Mammary epithelial cell (primary cell): ENCODE measurements at regions of chr6 and their contacts with region 1.

Region 1: DNA sequence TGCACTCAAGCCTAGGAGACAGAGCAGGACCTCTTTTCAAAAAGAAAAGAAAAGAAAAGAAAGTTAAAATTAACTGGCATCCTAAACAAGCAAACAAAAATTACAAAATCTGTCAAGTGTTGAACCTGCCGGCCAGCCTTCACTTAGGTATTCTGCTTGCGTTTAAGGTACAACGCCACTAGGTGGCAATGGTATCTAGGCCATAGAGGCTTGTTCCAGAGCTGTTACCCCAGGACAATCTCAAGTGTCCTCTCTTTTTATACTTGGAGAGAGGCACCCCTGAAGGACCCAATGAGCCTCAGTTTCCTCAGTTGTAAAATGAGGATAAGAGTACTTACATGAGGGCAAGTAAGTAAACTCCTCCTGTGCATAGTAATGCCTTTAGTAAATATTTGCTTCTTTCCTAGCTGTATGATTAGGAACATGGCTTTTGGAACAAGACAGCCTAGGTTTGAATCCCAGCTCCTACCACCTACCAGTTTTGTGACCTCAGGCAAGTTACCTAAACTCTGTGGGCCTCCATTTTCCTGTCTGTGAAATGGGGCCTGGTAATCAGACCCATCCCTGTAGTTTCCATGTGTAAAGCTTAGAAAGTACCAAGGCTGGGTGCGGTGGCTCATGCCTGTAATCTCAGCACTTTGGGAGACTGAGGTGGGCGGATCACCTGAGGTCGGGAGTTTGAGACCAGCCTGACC is 5.8 kb upstream of the PACSIN1 start:
- DNase-seq: peak; percentile 49
- H3K4me3 ChIP-seq: no peak overlapping the region
- H3K27ac ChIP-seq: no peak overlapping the region
- H3K4me1 ChIP-seq: peaks cover 6% of the 10 kb centered on the region
- H3K27me3 ChIP-seq: no peaks in the 10 kb centered on the region
- CTCF ChIP-seq: peak; percentile 69 to 84

Region 2: GRCh38 chr6:34161857-34162515 is 298.1 kb before region 1 on chr6:
- CTCF ChIA-PET with region 1: no interaction called
- dilution Hi-C with region 1: no loop called
- in situ Hi-C with region 1: no loop called
- intact Hi-C with region 1: loop called (anchors 1 kb)
- DNase-seq: no peak
- H3K4me3 ChIP-seq: no peak overlapping the region
- H3K27ac ChIP-seq: no peak overlapping the region
- H3K4me1 ChIP-seq: no peaks in the 10 kb centered on the region
- H3K27me3 ChIP-seq: no peaks in the 10 kb centered on the region
- CTCF ChIP-seq: no peak

Region 3: GRCh38 chr6:34526992-34527728 is 67.1 kb after region 1 on chr6:
- CTCF ChIA-PET with region 1: no interaction called
- dilution Hi-C with region 1: no loop called
- in situ Hi-C with region 1: no loop called
- intact Hi-C with region 1: loop called (anchors 2 kb)
- DNase-seq: peak; percentile 82
- H3K4me3 ChIP-seq: peak overlapping the region in 2 of 3 experiments; percentile 13 to 30
- H3K27ac ChIP-seq: peak overlapping the region; percentile 19
- H3K4me1 ChIP-seq: peaks cover 9% of the 10 kb centered on the region
- H3K27me3 ChIP-seq: no peaks in the 10 kb centered on the region
- CTCF ChIP-seq: peak; percentile 38 to 70

Region 4: GRCh38 chr6:34696739-34697543 is 236.9 kb after region 1 on chr6 and contains the start of gene ILRUN:
- CTCF ChIA-PET with region 1: no interaction called
- dilution Hi-C with region 1: no loop called
- in situ Hi-C with region 1: no loop called
- intact Hi-C with region 1: loop called (anchors 1 kb)
- DNase-seq: peak; percentile 93
- H3K4me3 ChIP-seq: peak within 1 kb of the TSS; percentile 87 to 97 (median 91)
- H3K27ac ChIP-seq: peak within 1 kb of the TSS; percentile 80
- H3K4me1 ChIP-seq: peaks cover 17% of the 10 kb centered on the region
- H3K27me3 ChIP-seq: no peaks in the 10 kb centered on the region
- CTCF ChIP-seq: no peak
- total RNA-seq, gene ILRUN: 40.0 to 67.3 TPM

Region 5: DNA sequence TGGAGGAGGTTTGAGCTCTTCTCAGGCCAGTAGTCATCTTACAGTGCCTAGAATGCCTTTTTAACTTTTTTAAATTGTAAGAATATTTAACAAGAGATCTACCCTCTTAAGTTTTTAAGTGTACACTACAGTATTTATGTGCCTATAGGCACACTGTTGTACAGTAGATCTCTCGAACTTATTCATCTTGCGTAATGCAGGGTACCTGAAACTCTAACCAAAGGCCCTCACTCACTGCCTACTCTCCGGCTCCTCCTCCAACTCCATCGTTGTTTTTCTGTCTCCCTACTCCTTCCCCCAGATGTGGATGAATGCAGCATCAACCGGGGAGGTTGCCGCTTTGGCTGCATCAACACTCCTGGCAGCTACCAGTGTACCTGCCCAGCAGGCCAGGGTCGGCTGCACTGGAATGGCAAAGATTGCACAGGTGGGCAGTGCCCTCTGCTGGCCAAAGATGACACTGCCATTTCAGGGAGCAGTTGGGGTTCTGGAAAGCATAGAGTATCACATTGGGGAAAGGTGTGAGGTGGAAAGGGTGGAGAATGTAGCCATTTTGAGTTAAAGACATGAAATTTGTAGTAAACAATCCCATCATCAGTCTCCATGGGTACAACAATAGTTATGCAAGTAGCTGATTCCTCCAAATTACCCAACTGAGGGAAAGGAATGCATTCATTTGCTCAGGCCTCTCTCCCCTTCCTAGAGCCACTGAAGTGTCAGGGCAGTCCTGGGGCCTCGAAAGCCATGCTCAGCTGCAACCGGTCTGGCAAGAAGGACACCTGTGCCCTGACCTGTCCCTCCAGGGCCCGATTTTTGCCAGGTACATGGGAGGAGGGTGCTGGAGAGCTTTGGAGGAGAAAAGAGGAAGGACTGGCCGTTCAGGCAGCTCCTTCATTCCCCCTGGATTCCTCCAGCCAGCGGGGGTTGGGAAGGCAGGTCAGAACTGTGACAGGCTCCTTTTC is 781.1 kb after region 1 on chr6:
- CTCF ChIA-PET with region 1: no interaction called
- dilution Hi-C with region 1: no loop called
- in situ Hi-C with region 1: no loop called
- intact Hi-C with region 1: loop called (anchors 2 kb)
- DNase-seq: peak; percentile 62
- H3K4me3 ChIP-seq: no peak overlapping the region
- H3K27ac ChIP-seq: no peak overlapping the region
- H3K4me1 ChIP-seq: no peaks in the 10 kb centered on the region
- H3K27me3 ChIP-seq: no peaks in the 10 kb centered on the region
- CTCF ChIP-seq: peak; percentile 96 to 98